Activated CD4-positive, alpha-beta T cell treated with anti-CD3 and anti-CD28 coated beads for 36 hours (primary cell): ENCODE measurements at regions of chr18 and their contacts with region 1.

Region 1: DNA sequence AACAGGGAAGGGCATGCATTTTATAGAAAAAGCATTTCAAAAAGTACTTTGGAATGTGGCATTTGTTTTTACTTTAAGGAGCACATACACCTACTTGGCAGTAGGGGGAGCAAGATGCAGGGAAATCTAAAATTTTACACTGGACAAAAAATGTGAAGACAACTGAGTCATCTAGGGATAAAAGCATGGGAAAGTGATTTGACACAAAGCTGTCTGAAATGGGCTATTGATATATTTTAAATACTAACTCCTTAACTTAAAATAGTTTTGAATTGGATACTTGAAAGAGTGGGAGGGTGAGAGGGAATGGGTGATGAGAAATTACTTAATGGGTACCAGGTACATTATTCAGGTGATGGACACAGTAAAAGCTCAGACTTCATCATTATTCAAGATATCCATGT is 15.8 kb downstream of the TMEM200C start:
- DNase-seq: no peak
- ATAC-seq: no peak
- H3K4me3 Mint-ChIP-seq: no peak overlapping the region
- H3K27ac Mint-ChIP-seq: no peak overlapping the region
- H3K4me1 Mint-ChIP-seq: no peaks in the 10 kb centered on the region
- H3K27me3 Mint-ChIP-seq: peaks cover 16% of the 10 kb centered on the region

Region 2: GRCh38 chr18:6219116-6219717 is 339.7 kb after region 1 on chr18:
- CTCF ChIA-PET with region 1: no interaction called
- POLR2A ChIA-PET with region 1: no interaction called
- intact Hi-C with region 1: loop called in 1 of 2 experiments (anchors 1 kb)
- DNase-seq: peak; percentile 46
- ATAC-seq: no peak
- H3K4me3 Mint-ChIP-seq: no peak overlapping the region
- H3K27ac Mint-ChIP-seq: no peak overlapping the region
- H3K4me1 Mint-ChIP-seq: no peaks in the 10 kb centered on the region
- H3K27me3 Mint-ChIP-seq: peaks cover 3% of the 10 kb centered on the region

Region 3: DNA sequence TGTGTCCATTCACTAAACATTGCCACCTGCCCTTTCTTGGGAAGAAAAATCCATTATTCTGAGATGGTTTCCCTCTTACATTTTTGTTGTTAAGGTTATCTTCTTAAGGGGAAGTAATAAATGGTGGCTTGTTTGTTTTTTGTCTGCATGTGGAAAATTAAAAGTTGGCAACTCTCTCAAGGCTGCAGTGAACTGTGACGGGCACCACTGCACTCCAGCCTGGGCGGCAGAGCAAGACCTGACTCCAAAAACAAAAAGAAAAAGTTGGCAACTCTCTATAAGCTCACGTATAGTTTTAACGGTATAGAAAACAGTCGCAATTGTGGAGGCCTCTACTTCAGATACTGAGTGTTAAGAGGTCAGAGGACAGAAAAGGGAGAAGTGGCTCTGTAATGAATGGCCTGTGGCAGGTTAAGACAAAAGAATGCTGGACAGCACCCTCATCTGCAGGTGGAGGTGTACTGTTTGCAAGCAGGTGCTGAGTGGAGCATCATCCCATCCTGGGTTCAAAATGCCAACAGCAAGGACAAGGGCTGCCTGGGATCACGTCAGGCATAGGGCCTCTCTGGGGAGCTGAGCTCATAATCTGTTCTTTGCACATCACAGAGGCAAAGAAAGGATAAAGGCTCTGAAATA is 518.6 kb after region 1 on chr18:
- CTCF ChIA-PET with region 1: no interaction called
- POLR2A ChIA-PET with region 1: no interaction called
- intact Hi-C with region 1: loop called in 1 of 2 experiments (anchors 10 kb)
- DNase-seq: no peak
- ATAC-seq: no peak
- H3K4me3 Mint-ChIP-seq: no peak overlapping the region
- H3K27ac Mint-ChIP-seq: no peak overlapping the region
- H3K4me1 Mint-ChIP-seq: no peaks in the 10 kb centered on the region
- H3K27me3 Mint-ChIP-seq: no peaks in the 10 kb centered on the region

Region 4: GRCh38 chr18:6482198-6482977 is 602.9 kb after region 1 on chr18:
- CTCF ChIA-PET with region 1: no interaction called
- POLR2A ChIA-PET with region 1: no interaction called
- intact Hi-C with region 1: loop called in 1 of 2 experiments (anchors 5 kb)
- DNase-seq: peak; percentile 25
- ATAC-seq: no peak
- H3K4me3 Mint-ChIP-seq: no peak overlapping the region
- H3K27ac Mint-ChIP-seq: no peak overlapping the region
- H3K4me1 Mint-ChIP-seq: no peaks in the 10 kb centered on the region
- H3K27me3 Mint-ChIP-seq: peaks cover 5% of the 10 kb centered on the region

Region 5: GRCh38 chr18:6521795-6522418 is 642.4 kb after region 1 on chr18:
- CTCF ChIA-PET with region 1: no interaction called
- POLR2A ChIA-PET with region 1: no interaction called
- intact Hi-C with region 1: loop called in 1 of 2 experiments (anchors 5 kb)
- DNase-seq: peak; percentile 50
- ATAC-seq: no peak
- H3K4me3 Mint-ChIP-seq: no peak overlapping the region
- H3K27ac Mint-ChIP-seq: no peak overlapping the region
- H3K4me1 Mint-ChIP-seq: no peaks in the 10 kb centered on the region
- H3K27me3 Mint-ChIP-seq: peaks cover 3% of the 10 kb centered on the region

Region 6: DNA sequence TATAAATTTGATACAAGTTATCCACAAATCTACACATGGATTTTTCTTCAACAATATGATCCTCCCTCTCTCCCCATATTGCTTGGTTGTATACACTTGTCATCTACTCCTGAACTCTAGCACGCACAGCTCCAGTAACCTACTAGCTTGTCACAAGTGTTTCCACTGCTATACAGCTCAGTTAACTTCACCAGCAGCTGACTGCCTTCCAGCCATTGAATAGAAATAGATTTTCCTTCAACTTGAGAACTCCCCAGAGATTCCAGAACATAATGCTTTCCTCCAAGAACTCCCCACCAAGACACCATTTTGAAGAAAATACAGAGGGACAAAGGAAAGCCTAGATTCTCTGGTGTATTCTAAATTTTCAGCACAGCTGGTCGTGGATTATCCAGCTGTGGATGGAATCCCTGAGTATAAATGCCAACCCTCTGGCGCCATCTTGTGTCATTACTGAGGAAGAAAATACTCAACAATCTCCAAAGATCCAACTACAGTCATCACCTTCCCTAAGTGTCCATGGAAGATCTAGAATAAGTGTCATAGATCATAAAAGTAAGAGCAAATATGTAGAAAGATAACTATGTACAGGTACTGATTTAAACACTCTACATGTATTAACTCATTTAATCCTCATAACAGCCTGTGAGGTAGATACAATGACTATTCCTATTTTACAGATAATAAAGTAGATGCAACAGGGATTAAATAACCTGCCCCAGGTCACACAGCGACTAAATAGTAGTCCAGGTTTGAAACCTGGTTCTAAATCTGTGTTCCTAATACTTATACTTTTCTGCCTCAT is 1006.7 kb after region 1 on chr18:
- CTCF ChIA-PET with region 1: no interaction called
- POLR2A ChIA-PET with region 1: no interaction called
- intact Hi-C with region 1: loop called in 1 of 2 experiments (anchors 1 kb)
- DNase-seq: peak; percentile 34
- ATAC-seq: no peak
- H3K4me3 Mint-ChIP-seq: no peak overlapping the region
- H3K27ac Mint-ChIP-seq: no peak overlapping the region
- H3K4me1 Mint-ChIP-seq: no peaks in the 10 kb centered on the region
- H3K27me3 Mint-ChIP-seq: peaks cover 2% of the 10 kb centered on the region